ENCODE measurements at regions of chr2 and their contacts with region 1.

Region 1: GRCh38 chr2:219073413-219074129 is 12.8 kb upstream of the IHH start:
- DNase-seq: peak; percentile 43
- ATAC-seq: no peak
- H3K4me3 Mint-ChIP-seq: no peak overlapping the region
- H3K27ac Mint-ChIP-seq: no peak overlapping the region
- H3K4me1 Mint-ChIP-seq: no peaks in the 10 kb centered on the region
- H3K27me3 Mint-ChIP-seq: no peaks in the 10 kb centered on the region
- CTCF ChIP-seq: peak; percentile 63

Region 2: DNA sequence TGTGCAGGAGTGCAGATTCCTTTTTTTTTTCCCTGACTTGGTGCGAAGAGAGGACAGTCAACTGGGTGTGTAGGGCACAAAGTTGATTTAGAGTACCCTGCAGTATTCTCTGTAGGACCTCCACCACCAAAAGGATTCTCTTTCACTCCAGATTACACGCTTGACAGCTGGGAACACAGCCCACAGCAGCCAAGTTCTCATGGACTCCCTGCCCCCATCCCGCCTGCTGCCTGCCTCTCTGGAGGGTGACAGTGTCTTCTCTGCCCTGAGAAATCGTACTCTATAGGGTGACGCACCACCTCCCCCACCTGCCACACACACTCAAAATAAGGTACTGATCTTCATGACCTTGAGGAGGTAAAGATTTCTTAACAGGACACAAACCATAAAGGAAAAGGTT is 13.8 kb after region 1 on chr2:
- CTCF ChIA-PET with region 1: interaction called, 24 read pairs
- POLR2A ChIA-PET with region 1: interaction called, 3 read pairs
- intact Hi-C with region 1: no loop called
- DNase-seq: no peak
- ATAC-seq: no peak
- H3K4me3 Mint-ChIP-seq: no peak overlapping the region
- H3K27ac Mint-ChIP-seq: no peak overlapping the region
- H3K4me1 Mint-ChIP-seq: peaks cover 14% of the 10 kb centered on the region
- H3K27me3 Mint-ChIP-seq: no peaks in the 10 kb centered on the region
- CTCF ChIP-seq: no peak

Region 3: DNA sequence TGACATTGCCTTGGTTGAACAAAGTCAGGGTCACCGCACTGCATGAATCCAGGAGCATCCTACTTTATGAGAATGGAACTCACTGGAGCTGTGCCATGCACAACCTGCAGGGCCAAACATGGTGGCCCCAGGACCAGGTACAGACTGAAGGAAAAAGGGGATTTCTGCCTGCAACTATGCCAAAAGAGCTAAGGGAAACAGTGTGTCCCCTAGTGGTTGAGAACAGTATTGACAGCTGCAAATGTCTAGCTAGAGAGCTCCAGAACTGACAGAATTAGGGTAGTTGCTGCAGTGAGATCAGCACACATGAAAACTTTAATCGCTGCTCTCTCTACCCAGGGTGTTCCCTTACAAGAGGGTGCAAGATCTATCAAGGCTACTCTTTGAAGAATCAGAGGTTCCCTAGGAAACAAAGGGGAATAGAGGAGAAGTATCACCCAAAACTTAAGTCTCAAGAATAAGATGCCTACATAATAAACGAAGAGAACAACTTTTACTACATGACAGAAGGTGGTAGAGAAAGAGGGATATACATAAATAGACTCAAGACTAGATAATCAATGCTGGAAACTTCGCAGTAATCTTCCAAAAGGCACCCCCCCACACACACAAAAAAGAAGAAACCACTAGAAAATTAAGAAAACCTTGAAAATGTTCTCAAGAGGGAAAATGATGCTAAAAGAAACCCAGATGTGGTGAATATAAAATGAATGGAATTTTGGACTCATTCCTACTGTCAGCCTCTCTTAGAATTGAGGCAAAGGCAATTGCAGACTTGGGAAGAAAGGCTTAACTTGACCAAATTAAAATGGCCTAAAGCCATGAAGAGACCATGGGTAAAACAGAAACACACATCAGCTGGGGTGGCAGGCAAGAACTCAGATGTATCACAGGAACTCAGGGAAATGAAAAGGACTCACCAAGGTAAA is 30.8 kb after region 1 on chr2:
- CTCF ChIA-PET with region 1: interaction called, 431 read pairs
- POLR2A ChIA-PET with region 1: no interaction called
- intact Hi-C with region 1: no loop called
- DNase-seq: peak; percentile 30
- ATAC-seq: peak; percentile 90
- H3K4me3 Mint-ChIP-seq: no peak overlapping the region
- H3K27ac Mint-ChIP-seq: peak overlapping the region; percentile 28
- H3K4me1 Mint-ChIP-seq: peaks cover 32% of the 10 kb centered on the region
- H3K27me3 Mint-ChIP-seq: no peaks in the 10 kb centered on the region
- CTCF ChIP-seq: peak; percentile 82

Region 4: DNA sequence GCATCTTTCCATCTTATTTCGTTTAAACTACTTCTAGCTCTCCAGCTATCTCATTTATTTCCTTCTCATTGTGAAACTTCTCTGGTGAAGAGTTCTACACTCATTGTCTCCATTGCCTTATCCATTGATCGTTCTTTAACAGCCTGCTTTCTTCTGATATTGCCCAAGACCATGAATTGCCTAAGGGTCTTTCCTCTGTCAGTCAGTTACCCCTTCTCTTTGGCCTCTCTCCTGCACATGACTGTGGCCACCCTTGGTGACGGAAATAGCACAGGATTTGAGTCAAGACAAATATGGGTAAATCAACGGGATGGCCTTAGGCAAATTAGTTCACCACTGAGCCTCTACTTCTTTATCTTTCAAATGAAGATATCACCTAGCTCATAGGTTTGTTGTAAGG is 60.4 kb after region 1 on chr2:
- CTCF ChIA-PET with region 1: interaction called, 10 read pairs
- POLR2A ChIA-PET with region 1: no interaction called
- intact Hi-C with region 1: no loop called
- DNase-seq: no peak
- ATAC-seq: no peak
- H3K4me3 Mint-ChIP-seq: no peak overlapping the region
- H3K27ac Mint-ChIP-seq: no peak overlapping the region
- H3K4me1 Mint-ChIP-seq: peaks cover 10% of the 10 kb centered on the region
- H3K27me3 Mint-ChIP-seq: no peaks in the 10 kb centered on the region
- CTCF ChIP-seq: no peak